Psoas muscle (tissue), 8 donors: ENCODE measurements at regions of chr19 and their contacts with region 1.

Region 1: DNA sequence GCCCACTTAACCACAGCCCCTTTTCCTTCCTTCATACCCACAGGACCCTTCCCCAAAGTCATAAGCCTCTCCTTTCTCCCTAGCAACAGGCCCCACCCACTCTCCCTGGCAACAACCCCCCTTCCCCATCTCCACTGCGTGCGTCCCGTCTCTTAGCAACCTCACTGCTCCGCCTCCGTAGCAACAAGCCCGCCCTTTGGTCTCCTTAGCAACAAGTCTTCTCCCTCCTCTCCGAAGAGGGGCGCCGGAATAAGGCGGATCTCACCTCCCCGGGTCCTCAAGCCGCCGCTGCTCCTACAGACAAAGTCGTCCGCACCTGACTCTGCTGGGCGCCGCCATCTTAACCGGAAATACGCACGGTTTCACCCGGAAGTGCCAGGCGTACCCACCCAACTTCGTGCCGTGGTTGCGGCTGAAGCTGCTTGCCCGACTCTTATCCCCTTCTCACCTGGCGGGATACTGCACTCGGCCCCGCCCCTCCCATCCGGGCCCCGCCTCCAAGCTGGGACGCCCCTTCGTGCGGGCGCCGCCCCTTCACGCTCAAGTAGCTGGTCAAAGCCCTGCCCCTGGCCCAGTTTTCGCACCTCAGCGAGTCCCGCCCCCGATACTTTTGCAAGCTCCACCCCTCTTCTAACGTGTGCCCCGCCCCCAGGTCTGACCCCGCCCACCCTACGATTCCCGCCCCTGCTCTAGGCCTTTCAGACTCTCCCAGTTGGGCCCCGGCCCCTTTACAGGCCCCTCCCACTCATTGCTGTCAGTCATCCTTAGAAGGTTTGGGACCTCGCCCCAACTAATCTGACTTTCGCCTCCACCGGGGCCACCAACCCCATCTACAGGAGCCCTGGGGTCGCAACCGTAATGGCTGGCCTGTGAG is at the start of gene HSPBP1:
- DNase-seq: peak; percentile 87 to 94
- ATAC-seq: peak; percentile 91 to 97 (median 95)
- H3K4me3 ChIP-seq: peak within 1 kb of the TSS; percentile 91
- H3K27ac ChIP-seq: peak within 1 kb of the TSS; percentile 77
- H3K4me1 ChIP-seq: peaks cover 5% of the 10 kb centered on the region
- H3K27me3 ChIP-seq: peaks cover 0 to 11% (median 4%) of the 10 kb centered on the region in 3 donors
- CTCF ChIP-seq: no peak
- total RNA-seq, gene HSPBP1: 23.0 to 34.0 (median 28.6) TPM

Region 2: GRCh38 chr19:55062734-55063492 is 217.1 kb before region 1 on chr19 and contains the start of gene RDH13:
- intact Hi-C with region 1: no loop called
- DNase-seq: peak; percentile 96 to 98
- ATAC-seq: peak; percentile 100
- H3K4me3 ChIP-seq: peak within 1 kb of the TSS; percentile 96
- H3K27ac ChIP-seq: peak within 1 kb of the TSS; percentile 71
- H3K4me1 ChIP-seq: peaks cover 4% of the 10 kb centered on the region
- H3K27me3 ChIP-seq: peaks cover 0 to 11% (median 4%) of the 10 kb centered on the region in 3 donors
- CTCF ChIP-seq: no peak
- total RNA-seq, gene RDH13: 4.5 to 18.0 (median 12.9) TPM

Region 3: GRCh38 chr19:55265723-55266386 is 14.2 kb before region 1 on chr19:
- intact Hi-C with region 1: loop called in 1 of 2 experiments (anchors 2 kb)
- DNase-seq: no peak
- ATAC-seq: no peak
- H3K4me3 ChIP-seq: no peak overlapping the region
- H3K27ac ChIP-seq: no peak overlapping the region
- H3K4me1 ChIP-seq: no peaks in the 10 kb centered on the region
- H3K27me3 ChIP-seq: no peaks in the 10 kb centered on the region
- CTCF ChIP-seq: no peak

Region 4: DNA sequence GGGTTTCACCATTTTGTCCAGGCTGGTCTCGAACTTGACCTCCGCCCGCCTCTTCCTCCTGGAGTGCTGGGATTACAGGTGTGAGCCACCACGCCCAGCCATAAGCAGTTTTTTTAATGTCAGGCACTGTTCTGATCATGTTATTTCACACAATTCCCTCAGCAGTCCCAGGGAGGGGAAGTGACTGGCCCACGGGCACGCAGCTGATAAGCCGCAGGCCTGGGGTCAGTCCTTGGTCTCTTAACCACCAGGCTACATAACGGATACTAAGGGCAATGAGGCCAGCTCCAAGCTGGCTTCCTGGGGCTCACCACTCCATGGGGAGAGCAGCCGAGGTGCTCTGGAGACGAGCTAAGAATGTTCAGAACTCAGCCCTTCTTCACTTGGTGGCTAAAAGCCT is 17.3 kb after region 1 on chr19:
- intact Hi-C with region 1: no loop called
- DNase-seq: no peak
- ATAC-seq: no peak
- H3K4me3 ChIP-seq: no peak overlapping the region
- H3K27ac ChIP-seq: no peak overlapping the region
- H3K4me1 ChIP-seq: no peaks in the 10 kb centered on the region
- H3K27me3 ChIP-seq: no peaks in the 10 kb centered on the region
- CTCF ChIP-seq: no peak

Region 5: GRCh38 chr19:56141417-56141993 is 861.5 kb after region 1 on chr19:
- intact Hi-C with region 1: no loop called
- DNase-seq: no peak
- ATAC-seq: no peak
- H3K4me3 ChIP-seq: peak overlapping the region; percentile 88
- H3K27ac ChIP-seq: peak overlapping the region; percentile 86
- H3K4me1 ChIP-seq: peaks cover 13% of the 10 kb centered on the region
- H3K27me3 ChIP-seq: no peaks in the 10 kb centered on the region
- CTCF ChIP-seq: no peak